Activated CD4-positive, alpha-beta memory T cell treated with anti-CD3 and anti-CD28 coated beads for 36 hours (primary cell): ENCODE measurements at regions of chr15 and their contacts with region 1.

Region 1: DNA sequence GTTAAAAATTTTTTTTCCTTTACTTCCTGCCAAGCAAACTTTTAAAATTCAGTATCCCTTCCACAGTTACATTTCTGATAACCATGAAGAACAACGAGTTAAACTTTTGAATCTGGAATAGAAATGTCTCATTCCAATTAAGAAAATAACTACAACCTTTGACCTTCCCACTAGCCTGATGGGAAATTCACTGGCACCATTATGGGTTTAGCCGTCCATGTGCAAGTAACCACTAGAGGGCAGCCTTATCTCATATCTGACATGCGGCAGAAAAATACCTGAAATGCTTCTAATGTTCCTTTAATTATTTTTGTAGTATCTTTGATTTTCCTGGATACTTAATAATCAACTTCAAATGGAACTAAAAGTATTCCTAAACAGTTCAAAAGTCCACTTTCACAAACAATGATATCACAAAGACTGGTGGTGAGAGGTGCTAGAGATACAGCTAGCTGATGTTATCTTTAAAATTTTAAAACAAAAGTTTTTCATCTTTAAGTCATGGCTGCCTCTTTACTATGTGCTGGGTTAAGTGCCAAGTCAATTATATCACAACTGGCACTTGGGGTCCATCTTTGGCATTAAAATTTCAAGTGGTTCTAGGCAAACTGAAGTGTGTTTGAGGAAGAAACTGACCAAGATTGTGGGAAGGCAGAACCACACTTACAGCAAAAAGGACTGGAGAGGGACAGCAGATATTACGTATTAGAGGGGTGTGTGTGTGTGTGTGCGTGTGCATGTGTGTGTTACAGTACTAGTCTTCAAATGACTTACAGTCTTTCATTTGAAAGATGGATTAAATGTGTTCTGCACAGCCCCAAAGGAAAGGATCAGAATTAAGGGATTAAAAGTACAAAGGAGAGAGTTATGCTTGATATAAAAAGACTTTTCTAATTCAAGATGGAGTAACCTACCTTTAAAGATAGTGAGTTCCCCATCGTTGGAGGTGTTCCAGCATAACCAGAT is 107.1 kb upstream of the ICE2 start:
- DNase-seq: peak; percentile 69
- H3K4me3 Mint-ChIP-seq: peak overlapping the region; percentile 63
- H3K27ac Mint-ChIP-seq: peak overlapping the region; percentile 67
- H3K4me1 Mint-ChIP-seq: peaks cover 78% of the 10 kb centered on the region
- H3K27me3 Mint-ChIP-seq: no peaks in the 10 kb centered on the region

Region 2: DNA sequence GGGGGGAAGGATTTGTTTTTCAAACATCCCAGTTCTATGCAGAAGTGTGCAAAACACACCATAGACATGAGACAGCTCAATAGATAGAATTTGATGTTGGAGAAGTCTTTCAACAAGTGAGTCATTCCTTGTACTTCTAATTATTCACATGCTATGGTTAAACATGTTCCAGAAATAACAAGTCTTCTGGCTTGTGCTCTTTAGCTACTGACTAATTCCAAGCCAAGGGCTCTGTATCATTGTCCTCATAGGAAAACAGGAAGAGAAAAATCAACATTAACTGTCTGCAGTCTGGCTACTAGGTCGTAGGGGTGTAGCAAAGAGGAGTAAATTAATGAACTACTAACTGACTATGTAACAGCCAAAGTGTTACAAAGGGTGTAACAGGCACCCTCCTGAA is 1353.5 kb before region 1 on chr15:
- CTCF ChIA-PET with region 1: no interaction called
- POLR2A ChIA-PET with region 1: no interaction called
- intact Hi-C with region 1: no loop called
- DNase-seq: no peak
- H3K4me3 Mint-ChIP-seq: no peak overlapping the region
- H3K27ac Mint-ChIP-seq: no peak overlapping the region
- H3K4me1 Mint-ChIP-seq: no peaks in the 10 kb centered on the region
- H3K27me3 Mint-ChIP-seq: no peaks in the 10 kb centered on the region

Region 3: DNA sequence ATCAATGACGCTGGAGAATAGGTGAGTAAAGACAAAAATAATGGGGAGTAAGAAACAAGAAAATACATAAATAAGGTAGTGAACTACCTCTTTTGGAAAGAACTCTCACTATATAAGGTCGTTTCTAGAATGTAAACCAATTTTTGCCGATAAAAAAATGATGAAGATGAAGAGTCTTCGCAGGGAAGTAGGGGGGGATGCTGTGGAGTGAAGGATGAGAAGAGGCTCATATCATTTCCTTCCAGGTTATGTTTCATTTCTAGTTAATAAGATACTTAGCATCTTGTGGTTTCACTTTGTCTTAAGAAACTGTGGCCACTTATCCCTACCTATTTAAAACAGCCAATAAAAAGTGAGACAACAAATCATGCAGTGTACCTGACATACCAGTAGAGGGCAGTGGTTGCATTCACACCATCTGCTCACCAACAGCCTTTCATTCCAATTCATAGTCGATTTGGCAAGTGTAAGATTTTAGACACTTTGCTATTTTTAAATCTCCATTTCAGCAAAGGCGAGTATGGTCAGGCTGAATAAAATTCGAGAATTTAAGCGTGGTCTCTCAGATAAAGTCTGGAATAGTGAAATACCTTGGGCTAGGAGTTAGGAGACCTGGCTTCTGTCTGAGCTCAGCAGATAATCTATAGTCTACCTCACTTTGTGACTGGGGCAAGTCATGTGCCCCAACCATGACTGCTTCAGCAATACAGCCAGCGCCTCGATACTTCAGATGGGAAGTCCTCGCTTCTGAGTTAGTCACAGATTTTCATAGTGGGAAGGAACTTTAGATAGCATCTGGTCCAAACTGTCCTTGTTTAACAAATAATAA is 78.2 kb before region 1 on chr15:
- CTCF ChIA-PET with region 1: interaction called, 21 read pairs
- POLR2A ChIA-PET with region 1: no interaction called
- intact Hi-C with region 1: loop called (anchors 1 kb)
- DNase-seq: peak; percentile 56
- H3K4me3 Mint-ChIP-seq: no peak overlapping the region
- H3K27ac Mint-ChIP-seq: peak overlapping the region; percentile 69
- H3K4me1 Mint-ChIP-seq: peaks cover 56% of the 10 kb centered on the region
- H3K27me3 Mint-ChIP-seq: no peaks in the 10 kb centered on the region

Region 4: DNA sequence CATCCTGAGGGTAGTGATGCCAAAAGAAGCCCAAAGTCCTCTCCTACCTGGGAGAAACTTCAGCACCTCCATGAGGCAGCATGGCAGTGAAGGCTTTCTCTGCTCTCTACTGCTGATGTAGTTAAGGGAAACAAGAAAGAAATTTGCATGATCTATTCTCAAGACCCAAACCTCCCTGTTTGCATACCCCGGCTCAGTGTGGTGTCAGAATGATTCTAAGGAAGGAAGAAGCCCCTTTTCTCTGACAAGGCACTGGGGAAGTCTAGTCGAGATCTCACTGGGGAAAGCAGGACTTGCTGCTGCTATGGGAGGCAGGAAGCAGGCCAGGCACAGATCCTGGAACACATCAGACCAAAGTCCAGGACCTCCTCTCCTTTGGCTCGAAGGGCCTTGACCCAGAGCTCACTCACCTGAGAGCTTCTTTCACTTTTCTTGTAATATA is 17.7 kb before region 1 on chr15:
- CTCF ChIA-PET with region 1: interaction called, 24 read pairs
- POLR2A ChIA-PET with region 1: interaction called, 41 read pairs
- intact Hi-C with region 1: loop called (anchors 2 kb)
- DNase-seq: no peak
- H3K4me3 Mint-ChIP-seq: peak overlapping the region; percentile 35
- H3K27ac Mint-ChIP-seq: peak overlapping the region; percentile 85
- H3K4me1 Mint-ChIP-seq: peaks cover 91% of the 10 kb centered on the region
- H3K27me3 Mint-ChIP-seq: no peaks in the 10 kb centered on the region

Region 5: GRCh38 chr15:60605879-60606304 is 19.9 kb after region 1 on chr15:
- CTCF ChIA-PET with region 1: no interaction called
- POLR2A ChIA-PET with region 1: no interaction called
- intact Hi-C with region 1: no loop called
- DNase-seq: no peak
- H3K4me3 Mint-ChIP-seq: no peak overlapping the region
- H3K27ac Mint-ChIP-seq: no peak overlapping the region
- H3K4me1 Mint-ChIP-seq: peaks cover 12% of the 10 kb centered on the region
- H3K27me3 Mint-ChIP-seq: peaks cover 2% of the 10 kb centered on the region

Region 6: GRCh38 chr15:60635507-60636352 is 49.7 kb after region 1 on chr15:
- CTCF ChIA-PET with region 1: no interaction called
- POLR2A ChIA-PET with region 1: no interaction called
- intact Hi-C with region 1: no loop called
- DNase-seq: no peak
- H3K4me3 Mint-ChIP-seq: no peak overlapping the region
- H3K27ac Mint-ChIP-seq: no peak overlapping the region
- H3K4me1 Mint-ChIP-seq: peaks cover 12% of the 10 kb centered on the region
- H3K27me3 Mint-ChIP-seq: no peaks in the 10 kb centered on the region

Region 7: DNA sequence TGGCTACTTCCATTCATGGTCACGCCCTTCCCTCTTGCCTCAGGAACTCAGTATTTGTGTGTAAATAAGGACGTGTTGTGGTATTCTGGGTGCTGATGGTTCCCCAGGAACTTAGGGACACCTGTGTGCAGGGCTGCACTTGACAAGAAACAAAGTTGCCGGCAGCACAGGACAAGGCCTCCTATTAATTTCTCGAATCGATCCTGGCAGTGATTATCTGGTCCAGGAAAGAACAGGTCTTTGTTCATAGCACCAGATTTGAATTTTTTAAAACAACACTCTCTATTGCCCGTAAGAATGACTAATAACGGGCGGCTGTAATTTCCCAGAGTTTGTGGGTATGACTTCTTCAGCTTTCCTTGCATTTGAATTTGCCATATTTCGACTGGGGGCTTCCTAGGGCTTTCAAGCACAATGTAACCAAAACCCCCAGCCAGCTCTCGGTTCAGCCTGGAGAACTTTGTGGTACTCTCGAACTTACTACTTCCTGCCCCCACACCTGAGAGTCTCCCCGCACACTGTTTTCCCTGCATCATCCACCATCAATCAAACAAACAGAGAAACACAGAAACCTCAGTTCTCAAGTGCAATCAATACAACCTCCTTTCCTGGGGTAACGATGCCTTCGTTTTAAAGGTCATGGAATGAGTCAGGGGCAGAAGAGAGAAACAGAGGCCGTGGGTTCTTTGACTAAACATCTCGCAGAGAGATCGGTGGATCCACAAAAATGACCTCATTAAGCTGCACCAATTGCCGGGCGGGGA is 134.6 kb after region 1 on chr15:
- CTCF ChIA-PET with region 1: interaction called, 26 read pairs
- POLR2A ChIA-PET with region 1: interaction called, 12 read pairs
- intact Hi-C with region 1: loop called (anchors 1 kb)
- DNase-seq: peak; percentile 86
- H3K4me3 Mint-ChIP-seq: peak overlapping the region; percentile 65
- H3K27ac Mint-ChIP-seq: peak overlapping the region; percentile 95
- H3K4me1 Mint-ChIP-seq: peaks cover 64% of the 10 kb centered on the region
- H3K27me3 Mint-ChIP-seq: no peaks in the 10 kb centered on the region

Region 8: GRCh38 chr15:60859996-60860494 is 274.0 kb after region 1 on chr15:
- CTCF ChIA-PET with region 1: interaction called, 9 read pairs
- POLR2A ChIA-PET with region 1: no interaction called
- intact Hi-C with region 1: loop called (anchors 5 kb)
- DNase-seq: no peak
- H3K4me3 Mint-ChIP-seq: no peak overlapping the region
- H3K27ac Mint-ChIP-seq: no peak overlapping the region
- H3K4me1 Mint-ChIP-seq: peaks cover 48% of the 10 kb centered on the region
- H3K27me3 Mint-ChIP-seq: no peaks in the 10 kb centered on the region

Region 9: GRCh38 chr15:61057376-61057775 is 471.4 kb after region 1 on chr15:
- CTCF ChIA-PET with region 1: no interaction called
- POLR2A ChIA-PET with region 1: no interaction called
- intact Hi-C with region 1: loop called (anchors 5 kb)
- DNase-seq: peak; percentile 28
- H3K4me3 Mint-ChIP-seq: no peak overlapping the region
- H3K27ac Mint-ChIP-seq: peak overlapping the region; percentile 46
- H3K4me1 Mint-ChIP-seq: peaks cover 13% of the 10 kb centered on the region
- H3K27me3 Mint-ChIP-seq: peaks cover 2% of the 10 kb centered on the region